ENCODE measurements at regions of chr21 and their contacts with region 1.

Region 1: GRCh38 chr21:30831194-30831765 is 1.7 kb upstream of the KRTAP7-1 start:
- DNase-seq: peak; percentile 46
- H3K4me3 ChIP-seq: no peak overlapping the region
- H3K27ac ChIP-seq: no peak overlapping the region
- H3K4me1 ChIP-seq: no peaks in the 10 kb centered on the region
- H3K27me3 ChIP-seq: peaks cover 12% of the 10 kb centered on the region
- CTCF ChIP-seq: peak; percentile 61

Region 2: DNA sequence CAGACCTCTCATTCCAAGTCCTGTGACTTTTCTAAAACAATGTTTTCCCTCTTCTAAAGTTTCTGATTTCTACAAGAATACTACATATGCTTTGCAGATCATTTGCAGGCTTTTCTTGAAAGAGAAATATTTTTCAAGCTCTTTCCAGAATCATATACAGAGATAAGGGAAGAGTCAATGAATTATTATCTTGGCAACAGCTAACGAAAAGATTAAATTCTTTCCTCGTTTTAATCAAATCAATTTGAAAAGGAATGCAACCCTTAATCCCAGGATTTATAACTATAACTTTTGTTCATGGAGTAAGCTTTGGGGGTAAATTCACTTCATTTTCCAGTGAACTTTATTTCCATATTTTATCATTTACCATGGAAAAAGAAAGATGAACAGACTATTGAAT is 43.2 kb after region 1 on chr21:
- CTCF ChIA-PET with region 1: no interaction called
- POLR2A ChIA-PET with region 1: no interaction called
- intact Hi-C with region 1: no loop called
- DNase-seq: no peak
- H3K4me3 ChIP-seq: no peak overlapping the region
- H3K27ac ChIP-seq: no peak overlapping the region
- H3K4me1 ChIP-seq: no peaks in the 10 kb centered on the region
- H3K27me3 ChIP-seq: no peaks in the 10 kb centered on the region
- CTCF ChIP-seq: no peak

Region 3: DNA sequence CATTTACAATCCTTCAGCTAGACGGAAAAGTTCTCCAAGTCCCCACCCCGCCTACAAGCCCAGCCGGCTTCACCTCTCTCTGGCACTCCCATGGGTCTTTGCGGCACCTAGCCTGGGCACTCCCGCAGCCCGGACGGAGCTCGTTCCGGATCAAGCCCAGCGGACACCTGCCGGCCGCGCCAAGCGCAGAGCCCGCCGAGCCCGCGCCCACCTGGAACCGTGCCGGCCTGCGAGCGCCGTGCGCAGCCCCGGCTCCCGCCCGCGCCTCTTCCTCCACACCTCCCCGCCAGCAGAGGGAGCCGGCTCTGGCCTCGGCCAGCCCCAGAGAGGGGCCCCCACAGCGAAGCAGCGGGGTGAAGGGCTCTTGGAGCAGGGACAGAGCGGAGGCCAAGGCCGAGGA is 257.0 kb after region 1 on chr21:
- CTCF ChIA-PET with region 1: no interaction called
- POLR2A ChIA-PET with region 1: no interaction called
- intact Hi-C with region 1: loop called (anchors 2 kb)
- DNase-seq: no peak
- H3K4me3 ChIP-seq: no peak overlapping the region
- H3K27ac ChIP-seq: no peak overlapping the region
- H3K4me1 ChIP-seq: no peaks in the 10 kb centered on the region
- H3K27me3 ChIP-seq: peaks cover 6% of the 10 kb centered on the region
- CTCF ChIP-seq: 0 out of 2 replicates have a peak, but pooled peaks have one; percentile 11